Common myeloid progenitor, CD34-positive (primary cell): ENCODE measurements at regions of chr17 and their contacts with region 1.

Region 1: GRCh38 chr17:73551759-73552158 is 92.5 kb downstream of the SDK2 start:
- DNase-seq: peak; percentile 79 to 92 (median 88)
- H3K4me3 ChIP-seq: peak overlapping the region in 5 of 7 experiments; percentile 38 to 74 (median 56)
- H3K27ac ChIP-seq: peak overlapping the region in 1 of 2 experiments; percentile 50
- H3K4me1 ChIP-seq: peaks cover 2 to 74% (median 36%) of the 10 kb centered on the region in 4 experiments
- H3K27me3 ChIP-seq: peaks cover 0 to 11% (median 0%) of the 10 kb centered on the region in 5 experiments

Region 2: DNA sequence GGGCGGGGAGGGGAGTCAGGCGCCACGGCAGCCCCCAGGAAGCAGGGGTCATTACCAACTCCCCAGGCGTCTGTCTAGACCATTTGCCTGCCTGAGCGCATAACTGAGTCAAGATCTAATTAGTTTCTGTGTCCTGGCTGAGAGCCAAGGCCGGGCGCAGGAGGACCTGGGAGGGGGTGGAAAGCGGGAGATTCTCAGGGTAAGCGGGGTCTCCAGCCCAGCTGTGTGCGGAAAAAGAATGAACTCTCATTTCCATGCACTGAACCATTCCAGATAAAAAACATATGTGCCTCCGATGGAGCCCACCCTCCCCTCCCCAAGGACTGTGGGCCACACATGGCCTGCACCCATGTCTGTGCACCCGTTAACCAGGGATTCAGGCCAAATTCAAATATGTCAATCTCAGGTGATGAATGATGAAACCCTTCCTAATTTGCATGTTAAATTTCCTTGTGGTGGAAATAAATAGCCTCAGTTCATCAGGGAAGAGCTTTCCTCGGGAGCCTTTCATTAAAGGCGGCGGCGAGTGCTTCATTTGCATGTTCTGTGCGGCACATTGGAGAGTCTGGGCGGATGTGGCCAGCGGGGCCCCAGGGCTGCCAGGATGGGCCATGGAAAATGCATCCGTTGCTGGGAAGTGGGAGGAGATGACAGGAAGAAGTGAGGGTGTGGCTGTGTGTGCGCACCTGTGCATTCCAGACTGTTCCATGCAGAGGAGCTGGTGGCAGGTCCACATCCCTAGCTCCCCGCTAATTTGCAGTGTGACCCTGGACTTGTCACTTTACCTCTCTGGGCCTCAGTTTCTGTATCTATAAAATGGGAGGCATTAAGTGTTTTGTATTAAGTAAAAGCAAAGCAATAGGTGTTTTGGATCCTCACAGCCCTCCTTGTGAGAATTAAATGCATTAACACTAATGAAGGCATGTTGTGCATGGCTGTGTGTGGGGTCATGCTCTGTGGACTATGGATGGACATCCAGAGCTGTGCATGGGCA is 58.6 kb before region 1 on chr17:
- CTCF ChIA-PET with region 1: no interaction called
- POLR2A ChIA-PET with region 1: no interaction called
- DNase-seq: no peak
- H3K4me3 ChIP-seq: no peak overlapping the region
- H3K27ac ChIP-seq: no peak overlapping the region
- H3K4me1 ChIP-seq: no peaks in the 10 kb centered on the region
- H3K27me3 ChIP-seq: no peaks in the 10 kb centered on the region

Region 3: GRCh38 chr17:73564843-73565242 is 13.1 kb after region 1 on chr17:
- CTCF ChIA-PET with region 1: interaction called, 15 read pairs
- POLR2A ChIA-PET with region 1: no interaction called
- DNase-seq: no peak
- H3K4me3 ChIP-seq: no peak overlapping the region
- H3K27ac ChIP-seq: no peak overlapping the region
- H3K4me1 ChIP-seq: peaks cover 0 to 39% (median 10%) of the 10 kb centered on the region in 4 experiments
- H3K27me3 ChIP-seq: no peaks in the 10 kb centered on the region

Region 4: GRCh38 chr17:73743518-73744201 is 191.9 kb after region 1 on chr17:
- CTCF ChIA-PET with region 1: no interaction called
- POLR2A ChIA-PET with region 1: no interaction called
- DNase-seq: no peak
- H3K4me3 ChIP-seq: no peak overlapping the region
- H3K27ac ChIP-seq: no peak overlapping the region
- H3K4me1 ChIP-seq: peaks cover 0 to 11% (median 0%) of the 10 kb centered on the region in 4 experiments
- H3K27me3 ChIP-seq: peaks cover 0 to 6% (median 0%) of the 10 kb centered on the region in 5 experiments